ENCODE measurements at regions of chr6 and their contacts with region 1.

Region 1: GRCh38 chr6:130381459-130382380 is 15.9 kb downstream of the TMEM200A start:
- DNase-seq: peak in 5 of 9 experiments; percentile 30 to 71 (median 51)
- ATAC-seq: peak; percentile 81
- H3K4me3 ChIP-seq: no peak overlapping the region
- H3K4me3 Mint-ChIP-seq: no peak overlapping the region
- H3K27ac ChIP-seq: no peak overlapping the region
- H3K27ac Mint-ChIP-seq: no peak overlapping the region
- H3K4me1 ChIP-seq: peaks cover 16% of the 10 kb centered on the region
- H3K4me1 Mint-ChIP-seq: peaks cover 18% of the 10 kb centered on the region
- H3K27me3 ChIP-seq: no peaks in the 10 kb centered on the region
- H3K27me3 Mint-ChIP-seq: no peaks in the 10 kb centered on the region
- CTCF ChIP-seq: peak; percentile 26

Region 2: GRCh38 chr6:130394246-130394645 is 12.5 kb after region 1 on chr6:
- CTCF ChIA-PET with region 1: interaction called, 5 read pairs
- POLR2A ChIA-PET with region 1: interaction called, 4 read pairs
- intact Hi-C with region 1: loop called in 1 of 2 experiments (anchors 2 kb)
- DNase-seq: no peak
- ATAC-seq: no peak
- H3K4me3 ChIP-seq: no peak overlapping the region
- H3K4me3 Mint-ChIP-seq: no peak overlapping the region
- H3K27ac ChIP-seq: no peak overlapping the region
- H3K27ac Mint-ChIP-seq: no peak overlapping the region
- H3K4me1 ChIP-seq: peaks cover 5% of the 10 kb centered on the region
- H3K4me1 Mint-ChIP-seq: peaks cover 8% of the 10 kb centered on the region
- H3K27me3 ChIP-seq: no peaks in the 10 kb centered on the region
- H3K27me3 Mint-ChIP-seq: no peaks in the 10 kb centered on the region
- CTCF ChIP-seq: no peak